Activated B cell treated with CpG ODN at 0.5 μM for 24 hours (primary cell): ENCODE measurements at regions of chr12 and their contacts with region 1.

Region 1: GRCh38 chr12:94805749-94806529 is 155.6 kb upstream of the TMCC3 start:
- DNase-seq: no peak
- ATAC-seq: peak; percentile 92
- H3K4me3 Mint-ChIP-seq: peak overlapping the region; percentile 21
- H3K27ac Mint-ChIP-seq: peak overlapping the region; percentile 77
- H3K4me1 Mint-ChIP-seq: peaks cover 57% of the 10 kb centered on the region
- H3K27me3 Mint-ChIP-seq: no peaks in the 10 kb centered on the region
- CTCF ChIP-seq: no peak

Region 2: DNA sequence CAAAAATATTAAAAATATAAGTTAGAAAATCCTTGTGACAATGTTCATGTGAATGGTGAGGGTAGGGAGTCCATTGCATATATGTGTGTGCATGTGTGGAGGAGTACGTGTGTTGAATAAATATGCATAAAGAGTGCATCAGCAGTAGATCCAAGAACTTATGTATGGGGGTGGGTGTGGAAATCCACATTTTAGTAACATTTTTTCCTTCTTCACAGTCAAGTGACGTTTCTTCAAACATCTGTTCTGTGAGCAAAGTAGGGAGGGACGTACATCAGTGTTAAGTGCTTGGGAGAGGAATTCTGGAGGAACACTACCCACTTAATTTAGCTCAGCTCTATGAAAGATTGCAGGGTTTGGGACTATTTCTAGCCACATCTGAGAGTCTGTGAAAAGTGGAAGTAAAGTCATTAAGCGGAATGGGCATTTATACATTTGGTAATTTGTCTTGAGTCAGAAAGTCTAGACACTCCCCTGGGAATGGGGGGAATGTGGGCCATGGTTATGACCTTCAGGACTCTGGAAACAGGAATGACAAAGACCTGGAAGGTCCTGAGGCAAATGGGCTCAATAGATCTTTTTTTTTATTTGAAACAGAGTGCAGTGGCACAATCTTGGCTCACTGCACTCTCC is 814.0 kb before region 1 on chr12:
- CTCF ChIA-PET with region 1: no interaction called
- POLR2A ChIA-PET with region 1: no interaction called
- intact Hi-C with region 1: no loop called
- DNase-seq: no peak
- ATAC-seq: no peak
- H3K4me3 Mint-ChIP-seq: no peak overlapping the region
- H3K27ac Mint-ChIP-seq: no peak overlapping the region
- H3K4me1 Mint-ChIP-seq: no peaks in the 10 kb centered on the region
- H3K27me3 Mint-ChIP-seq: peaks cover 3% of the 10 kb centered on the region
- CTCF ChIP-seq: no peak

Region 3: DNA sequence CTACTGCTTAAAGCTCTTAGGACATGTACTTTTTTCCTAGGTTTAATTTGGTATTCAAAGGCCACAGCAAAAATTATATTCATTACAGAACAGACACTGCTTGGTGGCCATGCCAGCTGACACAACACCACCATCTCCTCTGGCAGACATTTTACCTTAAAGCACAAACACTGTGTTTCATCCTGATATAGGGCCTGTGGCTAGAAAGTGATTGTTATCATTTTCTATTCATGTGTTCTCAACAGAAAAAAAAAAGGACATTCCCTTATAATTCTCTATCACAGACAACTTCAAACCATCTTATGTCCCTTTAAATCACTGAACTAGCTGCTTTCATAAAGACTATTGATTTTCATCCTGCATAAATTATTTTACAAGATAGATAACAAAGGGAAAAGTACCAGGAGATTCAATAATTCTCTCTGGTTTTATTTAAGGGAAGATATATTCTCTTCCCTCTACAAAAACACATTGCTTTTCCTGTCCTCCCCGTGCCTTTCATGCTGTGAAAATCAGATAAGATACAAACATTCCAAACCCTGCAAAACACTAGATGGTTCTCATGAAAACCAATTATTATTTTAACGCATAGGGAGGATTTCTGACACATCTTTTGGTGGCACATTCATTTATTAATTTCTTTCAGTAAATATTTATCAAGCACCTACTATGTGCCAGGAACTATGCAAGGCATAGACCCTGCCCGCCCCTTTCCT is 16.3 kb before region 1 on chr12:
- CTCF ChIA-PET with region 1: no interaction called
- POLR2A ChIA-PET with region 1: interaction called, 3 read pairs
- intact Hi-C with region 1: loop called (anchors 2 kb)
- DNase-seq: no peak
- ATAC-seq: no peak
- H3K4me3 Mint-ChIP-seq: no peak overlapping the region
- H3K27ac Mint-ChIP-seq: no peak overlapping the region
- H3K4me1 Mint-ChIP-seq: peaks cover 45% of the 10 kb centered on the region
- H3K27me3 Mint-ChIP-seq: no peaks in the 10 kb centered on the region
- CTCF ChIP-seq: no peak

Region 4: GRCh38 chr12:94795520-94795919 is 10.4 kb before region 1 on chr12:
- CTCF ChIA-PET with region 1: no interaction called
- POLR2A ChIA-PET with region 1: no interaction called
- intact Hi-C with region 1: loop called (anchors 1 kb)
- DNase-seq: no peak
- ATAC-seq: no peak
- H3K4me3 Mint-ChIP-seq: no peak overlapping the region
- H3K27ac Mint-ChIP-seq: peak overlapping the region; percentile 30
- H3K4me1 Mint-ChIP-seq: peaks cover 48% of the 10 kb centered on the region
- H3K27me3 Mint-ChIP-seq: no peaks in the 10 kb centered on the region
- CTCF ChIP-seq: no peak

Region 5: GRCh38 chr12:94817695-94818075 is 11.7 kb after region 1 on chr12:
- CTCF ChIA-PET with region 1: interaction called, 3 read pairs
- POLR2A ChIA-PET with region 1: interaction called, 8 read pairs
- intact Hi-C with region 1: loop called (anchors 1 kb)
- DNase-seq: no peak
- ATAC-seq: no peak
- H3K4me3 Mint-ChIP-seq: peak overlapping the region; percentile 87
- H3K27ac Mint-ChIP-seq: peak overlapping the region; percentile 97
- H3K4me1 Mint-ChIP-seq: peaks cover 71% of the 10 kb centered on the region
- H3K27me3 Mint-ChIP-seq: no peaks in the 10 kb centered on the region
- CTCF ChIP-seq: no peak